ENCODE measurements at regions of chr3 and their contacts with region 1.

Region 1: GRCh38 chr3:136093771-136094170 is 102.4 kb downstream of the MSL2 start:
- DNase-seq: no peak
- ATAC-seq: no peak
- H3K4me3 ChIP-seq: no peak overlapping the region
- H3K4me3 Mint-ChIP-seq: no peak overlapping the region
- H3K27ac ChIP-seq: no peak overlapping the region
- H3K27ac Mint-ChIP-seq: no peak overlapping the region
- H3K4me1 ChIP-seq: no peaks in the 10 kb centered on the region
- H3K4me1 Mint-ChIP-seq: peaks cover 0 to 1% (median 0%) of the 10 kb centered on the region in 7 donors
- H3K27me3 ChIP-seq: no peaks in the 10 kb centered on the region
- H3K27me3 Mint-ChIP-seq: peaks cover 5 to 9% (median 6%) of the 10 kb centered on the region in 5 donors

Region 2: DNA sequence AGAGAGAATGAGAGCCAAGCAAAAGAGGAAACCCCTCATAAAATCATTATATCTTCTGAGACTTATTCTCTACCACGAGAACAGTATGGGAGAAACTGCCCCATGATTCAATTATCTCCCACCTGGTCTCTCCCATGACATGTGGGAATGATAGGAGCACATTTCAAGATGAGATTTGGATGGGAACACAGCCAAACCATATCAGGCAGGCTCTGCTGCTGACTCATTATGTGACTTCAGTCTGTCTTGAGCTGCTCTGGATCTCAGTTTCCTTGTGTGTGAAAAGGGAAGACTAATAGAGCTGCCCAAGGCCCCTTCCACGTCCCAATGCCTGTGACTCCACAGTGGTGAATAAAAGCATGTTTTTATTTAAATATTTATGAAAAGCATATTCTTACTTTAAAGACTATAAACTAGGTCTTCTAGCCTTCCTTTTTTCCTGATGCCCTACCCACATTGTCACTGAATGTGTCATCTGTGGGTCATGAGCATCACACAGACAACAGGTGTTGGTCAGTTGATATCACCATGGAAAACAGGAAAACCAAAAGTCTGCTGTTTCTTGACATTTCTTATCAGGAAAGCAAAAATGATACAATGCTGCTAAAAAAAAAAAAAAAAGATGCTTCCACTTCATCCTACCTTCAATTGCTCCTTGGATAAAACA is 224.2 kb before region 1 on chr3:
- CTCF ChIA-PET with region 1: no interaction called
- POLR2A ChIA-PET with region 1: no interaction called
- intact Hi-C with region 1: no loop called
- DNase-seq: no peak
- ATAC-seq: no peak
- H3K4me3 ChIP-seq: no peak overlapping the region
- H3K4me3 Mint-ChIP-seq: no peak overlapping the region
- H3K27ac ChIP-seq: no peak overlapping the region
- H3K27ac Mint-ChIP-seq: no peak overlapping the region
- H3K4me1 ChIP-seq: no peaks in the 10 kb centered on the region
- H3K4me1 Mint-ChIP-seq: no peaks in the 10 kb centered on the region
- H3K27me3 ChIP-seq: no peaks in the 10 kb centered on the region
- H3K27me3 Mint-ChIP-seq: peaks cover 0 to 16% (median 4%) of the 10 kb centered on the region in 5 donors

Region 3: DNA sequence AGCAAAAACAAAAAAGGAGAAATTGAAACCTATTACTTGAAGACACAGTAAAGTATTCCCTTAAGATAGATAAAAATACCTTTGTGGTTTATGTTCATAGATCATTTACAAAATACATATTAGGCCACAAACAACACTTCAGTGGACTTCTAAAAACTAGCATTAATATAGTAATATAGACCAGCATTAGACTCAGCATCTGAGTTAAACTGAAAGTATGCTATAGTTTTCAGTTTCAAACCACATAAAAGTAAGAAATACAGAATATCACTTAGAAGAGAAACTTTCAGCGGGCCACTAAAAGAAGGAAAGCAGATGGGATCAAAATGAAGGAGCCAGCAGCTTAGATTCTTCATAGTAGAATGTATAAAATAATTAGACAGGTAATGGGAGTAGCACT is 15.7 kb after region 1 on chr3:
- CTCF ChIA-PET with region 1: no interaction called
- POLR2A ChIA-PET with region 1: interaction called, 3 read pairs
- intact Hi-C with region 1: loop called in 1 of 2 experiments (anchors 2 kb)
- DNase-seq: no peak
- ATAC-seq: no peak
- H3K4me3 ChIP-seq: no peak overlapping the region
- H3K4me3 Mint-ChIP-seq: no peak overlapping the region
- H3K27ac ChIP-seq: no peak overlapping the region
- H3K27ac Mint-ChIP-seq: no peak overlapping the region
- H3K4me1 ChIP-seq: no peaks in the 10 kb centered on the region
- H3K4me1 Mint-ChIP-seq: peaks cover 0 to 18% (median 11%) of the 10 kb centered on the region in 7 donors
- H3K27me3 ChIP-seq: no peaks in the 10 kb centered on the region
- H3K27me3 Mint-ChIP-seq: peaks cover 0 to 20% (median 0%) of the 10 kb centered on the region in 5 donors

Region 4: DNA sequence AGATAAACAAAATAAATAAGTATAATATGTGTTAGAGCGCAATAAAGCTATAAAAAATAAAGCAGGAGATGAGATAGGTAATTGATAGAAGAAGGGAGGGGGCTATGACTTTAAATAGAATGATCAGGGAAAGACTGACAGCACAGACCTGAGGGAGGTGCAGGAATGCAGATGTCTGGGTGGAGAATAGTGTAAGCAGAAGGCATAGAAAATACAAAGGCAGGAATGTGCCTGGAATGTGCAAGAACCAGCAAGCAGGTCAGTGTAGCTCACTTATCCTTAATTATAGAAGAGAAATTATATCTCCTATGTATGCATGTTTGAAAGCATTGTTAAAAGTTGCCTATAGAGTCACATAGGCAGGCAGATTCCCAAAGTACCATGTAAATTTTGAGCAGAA is 1431.0 kb after region 1 on chr3:
- CTCF ChIA-PET with region 1: no interaction called
- POLR2A ChIA-PET with region 1: no interaction called
- intact Hi-C with region 1: no loop called
- DNase-seq: no peak
- ATAC-seq: no peak
- H3K4me3 ChIP-seq: no peak overlapping the region
- H3K4me3 Mint-ChIP-seq: no peak overlapping the region
- H3K27ac ChIP-seq: no peak overlapping the region
- H3K27ac Mint-ChIP-seq: no peak overlapping the region
- H3K4me1 ChIP-seq: no peaks in the 10 kb centered on the region
- H3K4me1 Mint-ChIP-seq: no peaks in the 10 kb centered on the region
- H3K27me3 ChIP-seq: no peaks in the 10 kb centered on the region
- H3K27me3 Mint-ChIP-seq: peaks cover 0 to 4% (median 0%) of the 10 kb centered on the region in 5 donors